ENCODE measurements at regions of chr1 and their contacts with region 1.

Region 1: DNA sequence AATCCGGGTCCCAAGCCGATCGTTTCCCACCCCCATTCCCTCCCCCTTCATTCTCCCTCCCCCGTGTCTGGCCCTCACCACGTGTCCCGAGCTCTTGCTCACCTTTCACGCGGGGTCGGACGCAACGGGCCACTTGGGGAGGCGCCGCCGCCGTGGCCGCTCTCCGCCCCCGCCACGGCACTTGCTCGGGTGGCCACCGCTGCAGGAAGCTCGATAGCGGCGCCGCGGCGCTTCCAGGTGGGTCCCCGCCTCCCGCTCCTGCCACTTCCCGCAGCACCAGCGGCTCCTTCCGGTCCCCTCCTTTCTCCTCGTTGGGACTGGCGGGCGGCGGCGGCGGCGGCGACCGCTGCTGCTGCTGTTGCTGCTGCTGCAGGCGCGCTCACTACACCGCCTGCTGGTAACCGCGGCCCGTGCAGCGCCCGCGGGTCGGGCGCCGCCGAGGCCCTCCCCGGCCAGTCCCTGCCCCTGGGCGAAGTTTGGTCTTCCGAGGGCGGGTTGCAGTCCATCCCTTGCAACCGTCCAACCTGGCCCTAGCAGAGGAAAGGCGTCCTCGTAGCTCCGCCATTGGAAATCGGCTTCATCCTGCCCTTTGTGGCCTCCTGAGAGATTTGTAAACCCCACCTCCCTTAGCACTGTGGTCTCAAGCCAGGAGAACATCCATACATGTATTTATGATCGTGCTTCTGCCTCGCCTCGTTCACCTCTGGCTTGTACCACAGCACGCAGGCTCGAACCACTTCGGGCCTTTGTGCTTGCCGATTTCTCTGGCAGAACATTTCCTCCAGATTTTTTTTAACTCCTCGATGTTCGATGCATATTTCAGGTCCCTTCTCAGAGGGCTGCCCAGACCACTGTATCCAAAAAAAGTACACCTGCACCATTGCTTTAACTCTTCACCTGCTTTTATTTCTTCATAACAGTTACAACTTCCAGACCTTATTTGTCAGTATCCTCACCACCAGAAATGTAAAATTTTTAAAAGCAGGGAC is 996 bp upstream of the ZZZ3 start:
- H3K4me3 Mint-ChIP-seq: peak overlapping the region; percentile 95
- H3K27ac Mint-ChIP-seq: peak overlapping the region; percentile 97
- H3K4me1 Mint-ChIP-seq: peaks cover 46% of the 10 kb centered on the region
- H3K27me3 Mint-ChIP-seq: no peaks in the 10 kb centered on the region

Region 2: GRCh38 chr1:77219166-77219887 is 464.1 kb before region 1 on chr1 and contains the start of gene PIGK:
- intact Hi-C with region 1: loop called (anchors 2 kb)
- H3K4me3 Mint-ChIP-seq: peak within 1 kb of the TSS; percentile 86
- H3K27ac Mint-ChIP-seq: peak within 1 kb of the TSS; percentile 90
- H3K4me1 Mint-ChIP-seq: peaks cover 25% of the 10 kb centered on the region
- H3K27me3 Mint-ChIP-seq: no peaks in the 10 kb centered on the region

Region 3: DNA sequence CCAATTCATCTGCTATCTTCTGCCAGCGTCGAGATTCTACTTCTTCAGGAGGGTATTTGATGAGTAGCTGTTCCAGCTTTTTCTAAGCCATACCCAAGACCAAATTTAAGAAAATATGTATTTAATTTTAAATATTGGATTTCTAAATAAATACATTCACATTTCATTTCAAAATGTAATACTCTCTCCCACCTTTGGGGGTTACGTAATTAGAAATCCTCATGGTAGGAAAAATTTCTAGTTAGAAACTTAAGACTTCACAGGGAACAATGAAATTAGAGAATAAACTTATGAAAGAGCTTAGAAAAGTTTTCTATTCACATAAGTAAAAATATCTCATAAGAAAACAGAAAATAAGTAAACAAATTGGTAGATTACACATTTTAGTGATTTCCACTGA is 103.9 kb before region 1 on chr1:
- intact Hi-C with region 1: loop called (anchors 10 kb)
- H3K4me3 Mint-ChIP-seq: no peak overlapping the region
- H3K27ac Mint-ChIP-seq: no peak overlapping the region
- H3K4me1 Mint-ChIP-seq: no peaks in the 10 kb centered on the region
- H3K27me3 Mint-ChIP-seq: no peaks in the 10 kb centered on the region

Region 4: GRCh38 chr1:77759071-77760028 is 75.9 kb after region 1 on chr1 and contains the start of gene USP33:
- intact Hi-C with region 1: loop called (anchors 5 kb)
- H3K4me3 Mint-ChIP-seq: peak within 1 kb of the TSS; percentile 95
- H3K27ac Mint-ChIP-seq: peak within 1 kb of the TSS; percentile 94
- H3K4me1 Mint-ChIP-seq: peaks cover 32% of the 10 kb centered on the region
- H3K27me3 Mint-ChIP-seq: no peaks in the 10 kb centered on the region

Region 5: GRCh38 chr1:77978969-77979876 is 295.8 kb after region 1 on chr1 and contains the start of gene FUBP1:
- intact Hi-C with region 1: loop called (anchors 2 kb)
- H3K4me3 Mint-ChIP-seq: no peak within 1 kb of the TSS
- H3K27ac Mint-ChIP-seq: no peak within 1 kb of the TSS
- H3K4me1 Mint-ChIP-seq: peaks cover 27% of the 10 kb centered on the region
- H3K27me3 Mint-ChIP-seq: no peaks in the 10 kb centered on the region

Measured in dendritic cell treated with granulocyte-macrophage colony-stimulating factor and Interleukin-4, amounts not matched to agents 40 ng/mL and 50 ng/mL, for 4 days (primary cell).